WTC11 (cell line): ENCODE measurements at regions of chr2 and their contacts with region 1.

Region 1: GRCh38 chr2:25851740-25852503 is 26.4 kb downstream of the ASXL2 start:
- DNase-seq: no peak
- ATAC-seq: peak; percentile 67; the same call in 1 of the 2 replicates
- H3K4me3 Mint-ChIP-seq: no peak overlapping the region
- H3K27ac Mint-ChIP-seq: no peak overlapping the region
- H3K4me1 Mint-ChIP-seq: peaks cover 19% of the 10 kb centered on the region
- H3K27me3 Mint-ChIP-seq: no peaks in the 10 kb centered on the region
- CTCF ChIP-seq: peak; percentile 20; the same call in 1 of the 2 replicates

Region 2: DNA sequence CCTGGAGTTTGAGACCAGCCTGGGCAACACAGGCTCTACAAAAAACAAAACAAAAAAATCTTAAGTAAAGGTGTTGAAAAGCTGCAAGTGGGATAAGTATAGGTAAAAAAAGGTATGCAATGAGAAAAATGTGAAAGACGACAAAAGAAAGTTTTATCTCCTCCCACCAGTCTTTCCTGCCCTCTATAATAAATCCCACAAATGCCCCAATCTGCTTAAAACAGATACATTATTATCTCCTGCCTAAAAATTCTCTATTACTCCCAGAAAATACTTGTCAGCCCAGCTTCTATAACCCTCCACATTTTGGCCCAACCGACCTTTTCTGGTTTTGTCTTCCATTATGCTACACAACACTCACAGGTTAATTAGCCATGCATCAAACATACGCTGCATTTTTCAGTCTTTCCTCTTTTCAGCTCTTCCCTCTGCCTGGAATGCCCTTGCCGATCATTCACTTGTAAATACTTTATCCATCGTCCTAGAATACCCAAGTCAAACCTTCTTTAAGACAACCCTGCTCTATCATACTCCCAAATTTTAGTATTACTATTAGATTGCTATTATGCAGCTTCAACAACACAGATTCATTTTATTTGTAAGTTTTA is 15.6 kb after region 1 on chr2:
- CTCF ChIA-PET with region 1: interaction called, 12 read pairs
- POLR2A ChIA-PET with region 1: interaction called, 3 read pairs
- DNase-seq: no peak
- ATAC-seq: no peak
- H3K4me3 Mint-ChIP-seq: no peak overlapping the region
- H3K27ac Mint-ChIP-seq: peak overlapping the region; percentile 22
- H3K4me1 Mint-ChIP-seq: peaks cover 11% of the 10 kb centered on the region
- H3K27me3 Mint-ChIP-seq: no peaks in the 10 kb centered on the region
- CTCF ChIP-seq: no peak

Region 3: DNA sequence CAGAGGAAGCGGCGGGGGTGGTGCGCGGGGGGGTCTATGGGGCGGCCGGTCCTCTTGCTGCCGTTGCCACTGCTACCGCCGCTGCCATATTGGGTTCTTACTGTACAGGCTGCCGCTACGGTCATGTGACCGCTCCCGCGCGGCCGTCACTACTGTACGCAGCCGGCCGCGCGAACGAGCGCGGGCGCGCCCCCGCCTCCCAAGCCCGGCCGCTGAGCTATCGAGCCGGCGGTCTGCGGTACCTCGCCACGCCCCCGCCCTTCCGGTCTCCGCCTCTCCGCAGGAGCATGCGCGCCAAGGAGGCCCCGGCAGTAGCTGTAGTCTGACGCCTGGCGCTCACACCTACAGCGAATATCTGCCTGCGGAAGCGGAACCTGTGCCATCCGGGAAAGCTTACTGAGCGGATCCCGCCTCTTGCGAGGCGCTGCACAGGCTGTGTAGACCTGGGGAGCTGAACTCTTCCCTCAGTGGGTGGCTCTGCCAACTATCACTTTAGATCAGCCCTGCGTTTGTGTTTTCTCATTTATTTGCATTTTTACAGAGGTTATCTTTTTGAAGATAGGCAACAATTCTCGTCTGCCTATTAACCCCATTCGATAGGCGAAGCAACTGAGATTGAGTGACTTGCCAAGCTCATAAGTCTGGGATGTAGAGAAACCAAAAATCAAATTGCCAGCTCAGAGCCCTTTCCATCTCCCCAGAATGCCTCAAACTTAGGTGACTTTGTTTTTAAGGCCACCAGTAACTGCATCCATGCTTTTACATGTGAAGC is 26.6 kb after region 1 on chr2 and contains the start of gene ASXL2:
- CTCF ChIA-PET with region 1: interaction called, 19 read pairs
- POLR2A ChIA-PET with region 1: interaction called, 3 read pairs
- DNase-seq: peak; percentile 97
- ATAC-seq: peak; percentile 95
- H3K4me3 Mint-ChIP-seq: peak within 1 kb of the TSS; percentile 96
- H3K27ac Mint-ChIP-seq: peak within 1 kb of the TSS; percentile 98
- H3K4me1 Mint-ChIP-seq: peaks cover 16% of the 10 kb centered on the region
- H3K27me3 Mint-ChIP-seq: peaks cover 21% of the 10 kb centered on the region
- CTCF ChIP-seq: no peak
- total RNA-seq, gene ASXL2: 31.3 to 37.8 TPM (median 33.6 TPM) in 3 replicates

Region 4: GRCh38 chr2:25951071-25951547 is 99.2 kb after region 1 on chr2:
- CTCF ChIA-PET with region 1: interaction called, 19 read pairs
- POLR2A ChIA-PET with region 1: no interaction called
- DNase-seq: peak; percentile 78
- ATAC-seq: peak; percentile 86
- H3K4me3 Mint-ChIP-seq: no peak overlapping the region
- H3K27ac Mint-ChIP-seq: peak overlapping the region; percentile 66
- H3K4me1 Mint-ChIP-seq: peaks cover 12% of the 10 kb centered on the region
- H3K27me3 Mint-ChIP-seq: no peaks in the 10 kb centered on the region
- CTCF ChIP-seq: peak; percentile 96